T-cell (primary cell): ENCODE measurements at regions of chr1 and their contacts with region 1.

Region 1: DNA sequence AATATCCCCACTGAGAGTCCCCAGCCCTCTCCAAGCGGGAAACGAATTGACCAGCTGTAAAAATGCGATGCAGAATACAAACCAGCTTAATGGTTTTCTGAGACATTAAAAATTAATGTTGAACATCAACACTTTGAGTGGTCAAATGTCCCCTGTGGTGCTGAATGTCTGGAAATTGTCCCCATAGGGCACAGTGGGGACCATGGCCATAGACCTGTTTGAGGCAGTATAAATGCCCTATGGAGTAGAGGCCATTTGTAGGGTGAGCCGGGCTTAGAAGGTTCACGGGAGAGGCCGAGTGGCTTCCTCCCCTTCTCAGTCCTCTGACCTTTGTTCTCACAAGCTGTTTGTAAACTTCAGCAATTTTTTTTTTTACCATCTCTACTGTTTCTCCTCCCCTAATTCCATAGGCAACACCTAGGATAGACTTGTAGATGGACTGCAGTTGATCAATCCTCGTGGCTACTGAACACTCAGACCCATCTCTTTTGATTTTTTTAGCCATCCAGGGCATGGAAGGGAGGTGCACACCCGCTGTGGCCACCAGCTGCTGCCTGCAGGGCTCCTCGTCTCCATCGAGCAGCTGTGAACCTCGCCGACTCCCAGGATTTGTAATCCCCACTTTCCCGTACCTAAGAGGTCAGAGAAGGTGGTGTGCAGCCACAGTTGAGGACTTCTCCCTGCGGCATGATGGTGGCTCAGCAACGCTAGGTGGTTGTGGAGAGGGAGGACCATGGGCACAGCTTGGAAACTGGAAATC is 41.0 kb downstream of the KAZN start:
- DNase-seq: no peak
- ATAC-seq: no peak
- H3K4me3 ChIP-seq: no peak overlapping the region
- H3K4me3 Mint-ChIP-seq: no peak overlapping the region
- H3K27ac ChIP-seq: no peak overlapping the region
- H3K27ac Mint-ChIP-seq: no peak overlapping the region
- H3K4me1 ChIP-seq: no peaks in the 10 kb centered on the region
- H3K4me1 Mint-ChIP-seq: no peaks in the 10 kb centered on the region
- H3K27me3 ChIP-seq: peaks cover 0 to 8% of the 10 kb centered on the region in 2 experiments
- H3K27me3 Mint-ChIP-seq: peaks cover 6 to 11% of the 10 kb centered on the region in 2 donors

Region 2: GRCh38 chr1:14590781-14591180 is 48.7 kb before region 1 on chr1:
- CTCF ChIA-PET with region 1: no interaction called
- POLR2A ChIA-PET with region 1: interaction called in 1 of 2 experiments, 10 read pairs
- DNase-seq: no peak
- ATAC-seq: no peak
- H3K4me3 ChIP-seq: no peak overlapping the region
- H3K4me3 Mint-ChIP-seq: no peak overlapping the region
- H3K27ac ChIP-seq: no peak overlapping the region
- H3K27ac Mint-ChIP-seq: no peak overlapping the region
- H3K4me1 ChIP-seq: no peaks in the 10 kb centered on the region
- H3K4me1 Mint-ChIP-seq: no peaks in the 10 kb centered on the region
- H3K27me3 ChIP-seq: peaks cover 5 to 15% of the 10 kb centered on the region in 2 experiments
- H3K27me3 Mint-ChIP-seq: peaks cover 15 to 22% of the 10 kb centered on the region in 2 donors